ENCODE measurements at regions of chr3 and their contacts with region 1.

Region 1: DNA sequence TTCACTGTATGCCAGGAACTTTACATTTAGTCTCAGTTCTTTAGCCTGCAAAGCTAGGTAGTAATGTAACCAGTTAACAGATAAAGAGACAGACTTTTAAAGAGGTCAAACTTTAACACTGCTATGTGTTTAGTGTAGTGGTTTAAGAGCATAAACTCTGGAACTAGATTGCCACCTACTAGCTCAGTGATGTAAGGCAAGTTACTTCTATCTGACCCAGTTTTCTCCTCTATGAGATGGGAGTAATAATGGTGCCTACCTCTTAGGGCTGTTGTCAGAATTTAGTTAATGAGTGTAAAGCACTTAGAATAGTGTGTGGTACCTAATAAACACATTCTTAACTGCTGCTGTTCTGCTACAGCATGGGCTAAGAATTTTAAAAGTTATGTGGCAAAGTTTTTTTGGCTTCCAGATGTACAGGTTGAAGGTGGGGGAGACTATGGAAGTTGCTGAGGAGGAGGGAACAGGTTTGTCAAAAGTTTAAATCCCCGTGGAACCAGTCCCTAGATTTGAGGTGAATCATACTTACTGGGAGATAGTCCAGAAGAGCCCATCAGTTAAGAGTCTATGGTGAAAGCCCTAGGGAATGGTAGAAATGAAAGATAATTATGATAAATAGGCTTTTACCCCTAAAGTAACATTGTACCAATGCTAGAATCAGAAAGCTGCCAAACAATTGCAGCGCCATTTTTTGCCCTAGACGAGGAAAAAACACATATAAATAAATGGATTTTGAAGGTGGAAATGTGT is 13.9 kb downstream of the TSC22D2 start:
- DNase-seq: no peak
- ATAC-seq: no peak
- H3K4me3 ChIP-seq: no peak overlapping the region
- H3K4me3 Mint-ChIP-seq: no peak overlapping the region
- H3K27ac ChIP-seq: no peak overlapping the region
- H3K27ac Mint-ChIP-seq: peak overlapping the region in 2 of 9 donors; percentile 51 to 53
- H3K4me1 ChIP-seq: peaks cover 0 to 8% of the 10 kb centered on the region in 2 donors
- H3K4me1 Mint-ChIP-seq: peaks cover 24 to 77% (median 68%) of the 10 kb centered on the region in 7 donors
- H3K27me3 ChIP-seq: no peaks in the 10 kb centered on the region
- H3K27me3 Mint-ChIP-seq: no peaks in the 10 kb centered on the region

Region 2: GRCh38 chr3:149678365-149678948 is 743.5 kb before region 1 on chr3:
- CTCF ChIA-PET with region 1: no interaction called
- POLR2A ChIA-PET with region 1: no interaction called
- intact Hi-C with region 1: no loop called
- DNase-seq: no peak
- ATAC-seq: no peak
- H3K4me3 ChIP-seq: no peak overlapping the region
- H3K4me3 Mint-ChIP-seq: no peak overlapping the region
- H3K27ac ChIP-seq: no peak overlapping the region
- H3K27ac Mint-ChIP-seq: no peak overlapping the region
- H3K4me1 ChIP-seq: no peaks in the 10 kb centered on the region
- H3K4me1 Mint-ChIP-seq: peaks cover 0 to 3% (median 0%) of the 10 kb centered on the region in 7 donors
- H3K27me3 ChIP-seq: no peaks in the 10 kb centered on the region
- H3K27me3 Mint-ChIP-seq: peaks cover 4 to 26% (median 9%) of the 10 kb centered on the region in 5 donors

Region 3: GRCh38 chr3:150286390-150287147 is 135.4 kb before region 1 on chr3:
- CTCF ChIA-PET with region 1: interaction called, 4 read pairs
- POLR2A ChIA-PET with region 1: interaction called, 5 read pairs
- intact Hi-C with region 1: loop called in 1 of 2 experiments (anchors 1 kb)
- DNase-seq: peak in 7 of 9 donors; percentile 17 to 61 (median 50)
- ATAC-seq: peak; percentile 72
- H3K4me3 ChIP-seq: no peak overlapping the region
- H3K4me3 Mint-ChIP-seq: no peak overlapping the region
- H3K27ac ChIP-seq: no peak overlapping the region
- H3K27ac Mint-ChIP-seq: no peak overlapping the region
- H3K4me1 ChIP-seq: no peaks in the 10 kb centered on the region
- H3K4me1 Mint-ChIP-seq: no peaks in the 10 kb centered on the region
- H3K27me3 ChIP-seq: no peaks in the 10 kb centered on the region
- H3K27me3 Mint-ChIP-seq: peaks cover 4 to 69% (median 14%) of the 10 kb centered on the region in 5 donors

Region 4: DNA sequence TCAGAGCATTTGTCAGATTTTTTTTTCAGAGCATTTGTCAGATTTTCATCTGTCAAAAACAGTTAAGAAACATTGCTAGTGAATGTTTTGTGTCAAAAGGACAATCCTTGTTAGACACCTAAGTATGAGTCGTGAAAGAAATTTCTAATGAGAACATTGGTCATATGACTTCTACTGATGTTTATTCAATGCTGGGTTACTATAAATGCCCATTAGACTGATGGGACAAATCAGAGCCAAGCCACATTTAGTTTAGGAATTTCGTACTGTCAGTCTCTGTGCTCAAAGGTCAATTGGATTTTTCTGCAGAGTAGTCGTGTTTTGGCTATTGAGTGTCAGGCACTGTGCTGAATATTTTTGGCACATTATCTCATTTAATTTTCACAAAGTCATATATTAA is 17.7 kb after region 1 on chr3:
- CTCF ChIA-PET with region 1: no interaction called
- POLR2A ChIA-PET with region 1: no interaction called
- intact Hi-C with region 1: loop called in 1 of 2 experiments (anchors 2 kb)
- DNase-seq: no peak
- ATAC-seq: no peak
- H3K4me3 ChIP-seq: no peak overlapping the region
- H3K4me3 Mint-ChIP-seq: no peak overlapping the region
- H3K27ac ChIP-seq: no peak overlapping the region
- H3K27ac Mint-ChIP-seq: peak overlapping the region in 1 of 9 donors; percentile 34
- H3K4me1 ChIP-seq: no peaks in the 10 kb centered on the region
- H3K4me1 Mint-ChIP-seq: peaks cover 2 to 43% (median 22%) of the 10 kb centered on the region in 7 donors
- H3K27me3 ChIP-seq: no peaks in the 10 kb centered on the region
- H3K27me3 Mint-ChIP-seq: no peaks in the 10 kb centered on the region

Measured in naive thymus-derived CD4-positive, alpha-beta T cell (primary cell).